ENCODE measurements at regions of chr7 and their contacts with region 1.

Region 1: DNA sequence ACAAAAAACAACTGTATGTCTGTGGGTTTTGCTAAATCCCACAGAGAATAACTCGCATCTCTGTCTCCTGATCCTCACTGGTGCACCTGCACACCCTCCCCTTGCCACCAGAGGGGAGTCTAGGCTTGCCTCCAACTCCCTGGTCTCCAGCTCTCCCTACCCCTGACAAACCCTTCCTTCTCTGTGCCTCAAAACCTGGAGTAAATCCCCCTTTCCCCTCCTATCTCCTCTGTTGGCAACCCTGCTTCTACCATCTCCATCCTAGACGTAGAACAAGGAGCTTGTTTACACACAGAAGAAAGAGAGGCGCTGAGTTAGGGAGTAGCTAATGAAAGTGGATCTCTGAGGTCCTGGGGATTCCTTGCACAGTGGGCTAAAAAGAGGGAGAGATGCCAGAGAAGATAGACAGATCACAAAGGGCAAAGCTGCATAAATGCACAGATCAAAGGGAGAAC is 6.0 kb downstream of the MBLAC1 start:
- DNase-seq: peak; percentile 55
- H3K4me3 ChIP-seq: no peak overlapping the region
- H3K27ac ChIP-seq: no peak overlapping the region
- H3K4me1 ChIP-seq: peaks cover 5% of the 10 kb centered on the region
- H3K27me3 ChIP-seq: no peaks in the 10 kb centered on the region
- CTCF ChIP-seq: peak; percentile 79 to 92
- POLR2A ChIP-seq: no peak

Region 2: GRCh38 chr7:99693427-99694200 is 439.1 kb before region 1 on chr7:
- CTCF ChIA-PET with region 1: no interaction called
- POLR2A ChIA-PET with region 1: no interaction called
- dilution Hi-C with region 1: no loop called
- intact Hi-C with region 1: no loop called
- DNase-seq: no peak
- H3K4me3 ChIP-seq: no peak overlapping the region
- H3K27ac ChIP-seq: no peak overlapping the region
- H3K4me1 ChIP-seq: peaks cover under 1% of the 10 kb centered on the region
- H3K27me3 ChIP-seq: peaks cover 7 to 11% of the 10 kb centered on the region in 2 experiments
- CTCF ChIP-seq: no peak
- POLR2A ChIP-seq: no peak

Region 3: DNA sequence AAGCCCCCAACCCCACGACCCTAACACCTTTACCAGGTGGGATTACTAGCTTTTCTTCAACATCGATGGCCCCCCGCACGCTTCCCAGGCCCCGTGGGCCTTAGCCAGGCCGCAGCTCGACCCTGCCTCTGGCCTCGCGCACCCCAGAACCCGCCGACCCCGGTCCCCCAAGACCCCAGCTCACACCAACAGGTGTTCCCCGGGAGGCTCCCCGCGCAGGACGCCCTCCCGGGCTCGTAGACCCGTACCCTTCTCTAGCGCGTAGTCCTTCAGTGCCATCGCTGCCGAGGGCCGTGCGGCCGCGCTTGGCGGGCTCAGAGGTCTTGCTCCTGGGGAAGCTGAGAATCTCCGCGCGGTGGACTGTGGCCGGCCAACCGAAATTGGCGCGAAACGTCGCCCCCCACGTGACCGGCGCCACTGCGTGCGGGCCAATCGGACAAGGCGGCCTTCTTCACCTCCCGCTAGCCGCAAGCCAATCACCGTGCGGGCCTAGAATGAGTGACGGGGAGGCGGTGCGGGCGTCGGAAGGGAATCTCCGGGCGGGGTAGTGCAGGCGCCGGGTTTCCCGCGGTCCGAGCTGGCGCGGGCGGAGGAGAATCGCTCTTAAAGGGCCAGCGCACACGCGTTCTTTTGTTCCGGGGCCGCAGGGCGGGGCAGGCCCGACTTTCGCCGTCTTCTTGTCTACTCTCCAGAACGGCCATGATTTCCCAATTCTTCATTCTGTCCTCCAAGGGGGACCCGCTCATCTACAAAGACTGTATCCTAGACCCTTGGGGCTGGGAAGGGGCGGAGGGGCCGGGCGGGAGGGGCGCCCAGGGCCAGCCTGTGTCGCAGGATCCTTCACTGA is 31.5 kb before region 1 on chr7 and contains the starts of genes AP4M1 and MCM7:
- CTCF ChIA-PET with region 1: interaction called, 10 read pairs
- POLR2A ChIA-PET with region 1: interaction called, 4 read pairs
- dilution Hi-C with region 1: no loop called
- intact Hi-C with region 1: no loop called
- DNase-seq: peak; percentile 98
- H3K4me3 ChIP-seq: peak within 1 kb of the TSS; percentile 74 to 96 (median 75)
- H3K27ac ChIP-seq: peak within 1 kb of the TSS; percentile 84
- H3K4me1 ChIP-seq: peaks cover 18% of the 10 kb centered on the region
- H3K27me3 ChIP-seq: no peaks in the 10 kb centered on the region
- CTCF ChIP-seq: no peak
- POLR2A ChIP-seq: peak; percentile 38
- total RNA-seq, gene AP4M1: 20.5 and 22.7 TPM in 2 replicates
- total RNA-seq, gene MCM7: 183 and 187 TPM in 2 replicates

Region 4: GRCh38 chr7:100158229-100159098 is 25.7 kb after region 1 on chr7 and contains the start of gene TRAPPC14:
- CTCF ChIA-PET with region 1: interaction called, 10 read pairs
- POLR2A ChIA-PET with region 1: no interaction called
- dilution Hi-C with region 1: no loop called
- intact Hi-C with region 1: no loop called
- DNase-seq: peak; percentile 83
- H3K4me3 ChIP-seq: peak within 1 kb of the TSS; percentile 56 to 86 (median 66)
- H3K27ac ChIP-seq: peak within 1 kb of the TSS; percentile 32
- H3K4me1 ChIP-seq: peaks cover 14% of the 10 kb centered on the region
- H3K27me3 ChIP-seq: no peaks in the 10 kb centered on the region
- CTCF ChIP-seq: no peak
- POLR2A ChIP-seq: peak; percentile 77
- total RNA-seq, gene TRAPPC14: 23.0 and 24.0 TPM in 2 replicates

Region 5: DNA sequence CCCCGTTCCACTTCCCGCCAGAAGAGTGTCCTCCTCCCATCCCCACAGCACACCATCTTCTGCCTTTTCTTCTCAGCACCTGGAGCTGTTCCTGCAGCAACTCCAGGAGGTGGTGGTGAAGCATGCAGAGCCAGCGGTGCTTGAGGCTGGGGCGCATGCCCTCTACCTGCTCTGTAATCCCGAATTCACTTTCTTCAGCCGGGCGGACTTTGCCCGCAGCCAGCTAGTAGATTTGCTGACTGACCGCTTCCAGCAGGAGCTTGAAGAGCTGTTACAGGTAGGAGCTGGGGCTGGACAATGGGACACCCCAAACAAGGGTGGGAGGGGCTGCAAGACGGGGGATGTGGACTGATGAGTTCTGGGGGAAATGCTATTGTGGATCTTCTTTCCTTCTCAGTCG is 68.0 kb after region 1 on chr7:
- CTCF ChIA-PET with region 1: interaction called, 11 read pairs
- POLR2A ChIA-PET with region 1: no interaction called
- dilution Hi-C with region 1: no loop called
- intact Hi-C with region 1: no loop called
- DNase-seq: no peak
- H3K4me3 ChIP-seq: no peak overlapping the region
- H3K27ac ChIP-seq: no peak overlapping the region
- H3K4me1 ChIP-seq: no peaks in the 10 kb centered on the region
- H3K27me3 ChIP-seq: peaks cover 11 to 19% of the 10 kb centered on the region in 2 experiments
- CTCF ChIP-seq: no peak
- POLR2A ChIP-seq: no peak

Region 6: GRCh38 chr7:100215895-100216294 is 83.2 kb after region 1 on chr7:
- CTCF ChIA-PET with region 1: interaction called, 79 read pairs
- POLR2A ChIA-PET with region 1: no interaction called
- dilution Hi-C with region 1: no loop called
- intact Hi-C with region 1: no loop called
- DNase-seq: no peak
- H3K4me3 ChIP-seq: no peak overlapping the region
- H3K27ac ChIP-seq: no peak overlapping the region
- H3K4me1 ChIP-seq: no peaks in the 10 kb centered on the region
- H3K27me3 ChIP-seq: peaks cover 2 to 5% of the 10 kb centered on the region in 2 experiments
- CTCF ChIP-seq: no peak
- POLR2A ChIP-seq: no peak